CD4-positive, alpha-beta memory T cell (primary cell): ENCODE measurements at regions of chr19 and their contacts with region 1.

Region 1: DNA sequence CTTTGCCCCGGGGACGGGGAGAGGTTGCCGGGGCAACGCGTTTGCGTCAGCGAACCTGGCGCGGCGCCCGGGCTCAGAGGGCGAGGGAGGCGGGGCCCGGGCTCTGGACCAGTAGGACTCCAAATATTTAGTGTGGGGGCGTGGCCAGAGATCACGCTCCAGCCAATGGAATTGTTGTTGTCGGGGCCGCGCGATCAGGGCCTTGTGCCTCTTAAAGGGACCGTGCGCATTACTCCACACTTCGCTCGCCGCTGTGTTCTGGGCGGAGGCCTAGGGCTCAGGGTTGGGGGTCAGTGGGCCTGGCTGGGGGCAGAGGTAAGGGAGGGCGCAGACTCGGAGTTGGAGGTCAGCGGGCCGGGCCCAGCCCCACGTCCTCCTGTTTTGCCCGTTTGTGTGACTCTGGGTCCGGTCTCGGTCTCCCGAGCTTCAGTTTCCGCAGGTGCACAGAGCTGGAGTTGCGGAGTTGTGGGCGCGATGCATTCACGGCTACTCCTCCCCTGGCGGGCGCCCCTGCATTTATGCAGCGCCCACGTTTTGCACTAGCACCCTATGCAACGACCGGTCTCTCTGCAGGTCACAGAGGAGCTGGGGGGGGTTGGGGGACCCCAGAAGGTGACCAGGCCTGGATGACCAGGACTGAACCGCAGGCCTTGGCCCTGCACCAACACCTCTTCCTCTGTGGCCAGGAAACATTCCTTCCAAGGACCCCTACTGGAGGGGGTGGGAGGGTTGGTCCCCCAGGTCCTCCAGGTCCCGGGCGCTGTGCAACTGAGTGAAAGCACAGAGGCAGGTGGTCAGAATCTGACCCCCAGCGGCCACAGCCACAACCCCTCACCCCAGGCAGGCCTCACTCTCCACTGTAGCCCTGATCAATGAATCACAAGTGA is 10.7 kb upstream of the MKNK2 start:
- DNase-seq: peak; percentile 98 to 100 (median 100)
- H3K4me3 ChIP-seq: peak overlapping the region; percentile 87
- H3K4me3 Mint-ChIP-seq: peak overlapping the region; percentile 85 to 98 (median 92)
- H3K27ac ChIP-seq: peak overlapping the region; percentile 97
- H3K27ac Mint-ChIP-seq: peak overlapping the region; percentile 93 to 99 (median 97)
- H3K4me1 ChIP-seq: peaks cover 54% of the 10 kb centered on the region
- H3K4me1 Mint-ChIP-seq: peaks cover 12 to 53% (median 32%) of the 10 kb centered on the region in 4 donors
- H3K27me3 ChIP-seq: no peaks in the 10 kb centered on the region
- H3K27me3 Mint-ChIP-seq: no peaks in the 10 kb centered on the region

Region 2: GRCh38 chr19:1929021-1929742 is 132.6 kb before region 1 on chr19:
- CTCF ChIA-PET with region 1: no interaction called
- POLR2A ChIA-PET with region 1: no interaction called
- intact Hi-C with region 1: loop called (anchors 5 kb)
- DNase-seq: peak; percentile 72 to 82 (median 76)
- H3K4me3 ChIP-seq: peak overlapping the region in 1 of 2 donors; percentile 13
- H3K4me3 Mint-ChIP-seq: peak overlapping the region; percentile 68 to 86 (median 78)
- H3K27ac ChIP-seq: no peak overlapping the region
- H3K27ac Mint-ChIP-seq: peak overlapping the region; percentile 50 to 91 (median 67)
- H3K4me1 ChIP-seq: peaks cover 31% of the 10 kb centered on the region
- H3K4me1 Mint-ChIP-seq: peaks cover 15 to 34% (median 24%) of the 10 kb centered on the region in 4 donors
- H3K27me3 ChIP-seq: no peaks in the 10 kb centered on the region
- H3K27me3 Mint-ChIP-seq: no peaks in the 10 kb centered on the region

Region 3: DNA sequence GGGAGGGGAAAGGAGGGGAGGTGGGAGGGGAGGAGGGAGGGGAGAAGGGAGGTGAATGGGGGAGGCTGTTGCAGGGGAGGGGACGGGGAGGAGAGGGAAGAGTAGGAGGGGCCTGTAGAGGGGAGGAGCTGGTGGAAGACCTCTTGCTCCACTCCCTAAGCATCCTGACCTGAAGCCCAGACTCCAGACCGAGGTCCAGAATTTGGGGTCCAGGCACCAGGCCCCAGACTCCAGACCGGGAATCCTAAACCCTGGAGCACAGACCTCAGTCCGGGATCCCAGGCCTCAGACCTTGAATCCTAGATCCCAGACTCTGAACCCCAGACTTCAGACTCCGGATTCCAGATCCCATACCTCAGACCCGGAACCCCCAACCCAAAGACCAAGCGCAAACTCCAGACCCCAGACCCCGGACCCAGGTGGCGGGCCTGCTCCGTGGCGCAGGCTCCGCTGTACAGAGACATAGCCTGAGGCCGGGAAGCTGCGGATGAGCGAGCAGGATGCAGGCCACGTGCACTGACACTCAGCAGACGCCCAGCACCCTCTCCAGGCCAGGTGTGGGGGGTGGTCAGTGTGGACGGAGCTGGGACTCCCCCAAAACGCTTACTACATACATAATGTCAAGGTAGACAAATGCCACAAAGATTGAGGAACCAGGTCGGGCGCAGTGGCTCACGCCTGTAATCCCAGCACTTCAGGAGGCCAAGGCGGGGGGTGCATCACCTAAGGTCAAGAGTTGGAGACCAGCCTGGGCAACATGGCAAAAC is 45.5 kb before region 1 on chr19:
- CTCF ChIA-PET with region 1: interaction called, 5 read pairs
- POLR2A ChIA-PET with region 1: interaction called, 4 read pairs
- intact Hi-C with region 1: loop called (anchors 2 kb)
- DNase-seq: peak; percentile 43 to 78 (median 55)
- H3K4me3 ChIP-seq: no peak overlapping the region
- H3K4me3 Mint-ChIP-seq: peak overlapping the region; percentile 43 to 65 (median 60)
- H3K27ac ChIP-seq: peak overlapping the region; percentile 18
- H3K27ac Mint-ChIP-seq: peak overlapping the region in 6 of 7 donors; percentile 36 to 91 (median 64)
- H3K4me1 ChIP-seq: peaks cover 16% of the 10 kb centered on the region
- H3K4me1 Mint-ChIP-seq: peaks cover 7 to 25% (median 16%) of the 10 kb centered on the region in 4 donors
- H3K27me3 ChIP-seq: no peaks in the 10 kb centered on the region
- H3K27me3 Mint-ChIP-seq: no peaks in the 10 kb centered on the region

Region 4: DNA sequence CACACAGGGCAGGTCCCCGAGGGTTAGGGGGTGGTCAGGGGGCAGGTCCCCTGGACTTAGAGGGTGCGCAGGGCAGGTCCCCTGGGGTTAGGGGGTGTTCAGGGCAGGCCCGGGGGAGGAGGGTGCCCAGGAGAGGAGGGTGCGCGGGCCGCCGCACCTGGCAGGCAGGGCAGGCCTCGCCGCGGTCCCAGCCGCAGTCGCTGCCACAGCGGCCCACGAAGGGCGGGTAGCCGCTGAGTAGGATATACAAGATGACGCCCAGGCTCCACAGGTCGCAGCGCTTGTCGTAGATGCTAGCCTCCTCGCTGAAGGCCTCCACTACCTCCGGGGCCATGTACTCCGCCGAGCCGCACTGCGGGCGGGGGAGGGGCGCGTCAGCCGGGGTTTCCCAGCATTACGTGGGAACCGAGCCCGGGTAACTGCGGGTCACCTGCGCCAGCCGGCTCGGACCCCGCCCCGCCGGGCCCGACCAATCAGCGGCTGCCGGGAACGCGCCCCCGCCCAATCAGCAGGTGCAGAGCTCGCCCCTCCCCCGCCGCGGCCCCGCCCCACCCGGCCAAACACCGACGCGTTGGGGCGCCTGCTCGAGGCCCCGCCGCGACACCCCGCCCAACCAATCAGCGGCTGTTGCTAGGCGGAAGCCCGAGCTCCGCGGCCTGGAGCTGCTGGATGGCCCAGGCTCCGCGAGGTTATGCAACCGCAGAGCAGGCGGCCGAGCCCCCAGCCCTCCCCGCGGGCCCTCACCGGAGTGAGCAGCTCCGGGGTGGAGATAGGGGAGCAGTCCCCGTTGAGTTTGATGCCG is 19.9 kb before region 1 on chr19:
- CTCF ChIA-PET with region 1: interaction called, 8 read pairs
- POLR2A ChIA-PET with region 1: interaction called, 88 read pairs
- intact Hi-C with region 1: loop called (anchors 2 kb)
- DNase-seq: peak; percentile 99 to 100 (median 99)
- H3K4me3 ChIP-seq: peak overlapping the region; percentile 36 to 57
- H3K4me3 Mint-ChIP-seq: peak overlapping the region; percentile 28 to 74 (median 60)
- H3K27ac ChIP-seq: peak overlapping the region; percentile 97
- H3K27ac Mint-ChIP-seq: peak overlapping the region; percentile 92 to 98 (median 96)
- H3K4me1 ChIP-seq: peaks cover 61% of the 10 kb centered on the region
- H3K4me1 Mint-ChIP-seq: peaks cover 9 to 51% (median 27%) of the 10 kb centered on the region in 4 donors
- H3K27me3 ChIP-seq: no peaks in the 10 kb centered on the region
- H3K27me3 Mint-ChIP-seq: no peaks in the 10 kb centered on the region

Region 5: DNA sequence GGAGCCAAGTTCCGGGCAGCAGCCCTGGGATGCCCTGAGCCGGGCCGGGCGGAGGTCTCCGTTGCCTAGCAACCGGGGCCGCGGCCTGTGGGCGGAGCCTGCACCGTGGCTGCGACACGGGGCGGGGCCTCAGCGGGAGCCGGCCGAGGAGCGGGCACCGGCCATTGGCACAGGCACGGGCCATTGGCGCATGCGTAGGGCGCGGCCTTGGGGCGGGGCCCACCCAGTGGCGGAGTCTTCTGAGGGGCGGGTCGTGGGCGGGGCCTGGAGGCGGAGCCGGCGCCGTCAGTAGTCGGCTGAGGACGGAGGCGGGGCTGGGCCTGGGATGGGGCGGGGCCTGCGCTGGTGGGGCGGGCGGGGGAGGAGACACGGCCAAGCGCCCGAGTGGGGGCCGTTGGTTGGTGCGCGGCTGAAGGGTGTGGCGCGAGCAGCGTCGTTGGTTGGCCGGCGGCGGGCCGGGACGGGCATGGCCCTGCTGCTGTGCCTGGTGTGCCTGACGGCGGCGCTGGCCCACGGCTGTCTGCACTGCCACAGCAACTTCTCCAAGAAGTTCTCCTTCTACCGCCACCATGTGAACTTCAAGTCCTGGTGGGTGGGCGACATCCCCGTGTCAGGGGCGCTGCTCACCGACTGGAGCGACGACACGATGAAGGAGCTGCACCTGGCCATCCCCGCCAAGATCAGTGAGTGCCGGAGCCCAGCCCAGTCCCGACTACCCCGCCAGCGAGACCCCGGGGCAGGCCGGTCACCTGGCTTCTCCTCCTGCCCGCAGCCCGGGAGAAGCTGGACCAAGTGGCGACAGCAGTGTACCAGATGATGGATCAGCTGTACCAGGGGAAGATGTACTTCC is 35.0 kb after region 1 on chr19 and contains the start of gene IZUMO4:
- CTCF ChIA-PET with region 1: no interaction called
- POLR2A ChIA-PET with region 1: interaction called, 11 read pairs
- intact Hi-C with region 1: loop called (anchors 1 kb)
- DNase-seq: peak; percentile 98 to 100 (median 99)
- H3K4me3 ChIP-seq: peak within 1 kb of the TSS; percentile 49 to 85
- H3K4me3 Mint-ChIP-seq: peak within 1 kb of the TSS; percentile 91 to 97 (median 96)
- H3K27ac ChIP-seq: peak within 1 kb of the TSS; percentile 81
- H3K27ac Mint-ChIP-seq: peak within 1 kb of the TSS; percentile 95 to 99 (median 96)
- H3K4me1 ChIP-seq: peaks cover 38% of the 10 kb centered on the region
- H3K4me1 Mint-ChIP-seq: peaks cover 12 to 44% (median 28%) of the 10 kb centered on the region in 4 donors
- H3K27me3 ChIP-seq: no peaks in the 10 kb centered on the region
- H3K27me3 Mint-ChIP-seq: no peaks in the 10 kb centered on the region
- total RNA-seq, gene IZUMO4: 18.6 to 22.1 TPM